CD4-positive, alpha-beta memory T cell (primary cell): ENCODE measurements at regions of chr2 and their contacts with region 1.

Region 1: DNA sequence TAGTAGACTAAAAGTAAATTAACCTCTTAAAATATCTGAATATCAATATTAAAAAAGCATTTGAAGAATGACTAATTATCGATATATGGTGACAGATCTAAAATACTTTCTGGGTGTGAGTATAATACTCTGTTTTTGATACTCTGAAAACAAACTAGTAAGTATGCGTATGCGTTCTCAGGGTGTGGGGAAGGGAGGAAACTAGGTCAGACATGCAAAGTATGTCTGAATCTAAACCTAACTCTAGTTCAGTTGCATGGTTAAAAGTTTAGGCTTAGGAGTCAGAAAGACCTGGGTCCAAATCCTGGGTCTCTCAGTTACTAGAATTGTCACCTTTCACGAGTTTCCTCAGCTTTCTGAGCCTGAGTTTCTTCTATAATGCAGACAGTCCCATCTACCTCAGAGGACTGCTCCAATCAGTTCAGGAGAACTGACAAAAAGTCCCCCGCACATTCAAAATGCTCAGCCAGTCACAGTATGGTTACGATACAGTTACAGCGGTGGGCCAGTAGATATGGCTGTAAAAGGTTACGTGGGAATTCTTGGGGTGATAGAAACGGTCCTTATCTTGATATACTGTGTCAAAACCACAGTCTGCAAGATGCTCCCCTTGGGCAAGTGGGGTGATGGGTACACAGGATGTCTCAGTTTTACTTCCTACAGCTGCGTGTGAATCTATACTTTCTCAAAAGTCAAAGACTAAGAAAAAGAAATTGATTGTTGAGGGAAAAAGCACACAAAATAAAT is 29.2 kb downstream of the UNC50 start:
- DNase-seq: peak; percentile 51 to 88 (median 59)
- H3K4me3 ChIP-seq: no peak overlapping the region
- H3K4me3 Mint-ChIP-seq: peak overlapping the region in 7 of 8 donors; percentile 61 to 84 (median 73)
- H3K27ac ChIP-seq: peak overlapping the region; percentile 56
- H3K27ac Mint-ChIP-seq: peak overlapping the region; percentile 84 to 95 (median 94)
- H3K4me1 ChIP-seq: peaks cover 39% of the 10 kb centered on the region
- H3K4me1 Mint-ChIP-seq: peaks cover 27 to 46% (median 38%) of the 10 kb centered on the region in 4 donors
- H3K27me3 ChIP-seq: no peaks in the 10 kb centered on the region
- H3K27me3 Mint-ChIP-seq: no peaks in the 10 kb centered on the region

Region 2: GRCh38 chr2:98234776-98235175 is 402.8 kb before region 1 on chr2:
- CTCF ChIA-PET with region 1: no interaction called
- POLR2A ChIA-PET with region 1: no interaction called
- intact Hi-C with region 1: no loop called
- DNase-seq: no peak
- H3K4me3 ChIP-seq: no peak overlapping the region
- H3K4me3 Mint-ChIP-seq: no peak overlapping the region
- H3K27ac ChIP-seq: no peak overlapping the region
- H3K27ac Mint-ChIP-seq: no peak overlapping the region
- H3K4me1 ChIP-seq: no peaks in the 10 kb centered on the region
- H3K4me1 Mint-ChIP-seq: no peaks in the 10 kb centered on the region
- H3K27me3 ChIP-seq: no peaks in the 10 kb centered on the region
- H3K27me3 Mint-ChIP-seq: peaks cover 15 to 16% of the 10 kb centered on the region in 2 donors

Region 3: DNA sequence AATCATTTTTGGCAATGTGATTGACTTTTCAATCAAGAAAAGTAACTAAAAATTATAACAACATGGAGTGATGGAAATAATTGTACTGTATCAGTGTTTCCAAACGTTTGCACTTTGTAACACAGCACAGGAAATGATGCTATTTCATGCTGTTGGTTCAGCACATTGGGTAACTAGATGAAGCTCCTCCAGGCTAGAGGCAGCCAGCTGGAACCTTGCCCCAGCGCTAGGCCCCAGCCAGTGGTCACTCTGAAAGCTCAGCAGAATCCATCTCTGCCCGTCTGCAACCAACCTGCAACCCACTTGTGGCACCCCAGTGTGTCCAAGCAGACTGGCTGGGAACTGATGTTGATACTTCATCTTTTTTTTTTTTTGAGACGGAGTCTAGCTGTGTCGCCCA is 13.9 kb before region 1 on chr2:
- CTCF ChIA-PET with region 1: no interaction called
- POLR2A ChIA-PET with region 1: interaction called, 4 read pairs
- intact Hi-C with region 1: loop called (anchors 2 kb)
- DNase-seq: no peak
- H3K4me3 ChIP-seq: no peak overlapping the region
- H3K4me3 Mint-ChIP-seq: no peak overlapping the region
- H3K27ac ChIP-seq: no peak overlapping the region
- H3K27ac Mint-ChIP-seq: peak overlapping the region in 2 of 7 donors; percentile 17 to 60
- H3K4me1 ChIP-seq: peaks cover 4% of the 10 kb centered on the region
- H3K4me1 Mint-ChIP-seq: peaks cover 3 to 16% (median 7%) of the 10 kb centered on the region in 4 donors
- H3K27me3 ChIP-seq: no peaks in the 10 kb centered on the region
- H3K27me3 Mint-ChIP-seq: no peaks in the 10 kb centered on the region

Region 4: DNA sequence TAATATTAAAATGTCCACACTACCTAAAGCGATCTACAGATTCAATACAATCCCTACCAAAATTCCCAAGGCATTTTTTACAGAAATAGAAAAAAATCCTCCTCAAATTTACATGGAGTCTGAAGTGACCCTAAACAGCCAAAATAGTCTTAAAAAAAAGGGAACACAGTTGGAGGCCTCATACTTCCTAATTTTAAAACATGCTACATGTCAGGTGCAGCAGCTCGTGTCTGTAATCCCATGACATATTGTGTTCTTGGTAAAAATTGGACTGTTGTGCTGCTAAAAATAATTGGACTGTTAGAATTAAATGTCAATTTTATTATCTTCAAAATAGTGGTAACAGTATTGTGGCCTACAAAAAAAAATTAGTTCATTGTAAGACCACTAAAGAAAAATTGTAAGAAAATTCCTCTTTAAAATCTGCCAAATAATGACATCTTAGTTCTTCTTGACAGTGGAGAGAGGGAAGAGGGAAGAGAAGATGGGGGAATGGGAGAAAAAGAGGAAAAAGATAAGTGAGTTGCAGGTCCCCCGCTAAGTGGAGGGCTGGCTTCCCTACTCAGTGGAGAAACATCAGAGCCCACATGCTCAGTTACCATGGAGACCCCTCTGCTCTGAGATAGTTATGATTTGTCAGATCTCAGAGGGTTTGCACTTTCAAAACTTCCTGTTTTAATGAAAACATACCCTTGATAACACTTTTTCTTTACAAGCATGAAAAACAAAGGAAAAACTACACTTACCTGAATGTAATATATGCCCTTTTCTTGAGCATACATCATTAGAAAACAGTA is 17.3 kb after region 1 on chr2:
- CTCF ChIA-PET with region 1: interaction called, 9 read pairs
- POLR2A ChIA-PET with region 1: interaction called, 10 read pairs
- intact Hi-C with region 1: no loop called
- DNase-seq: peak; percentile 47 to 67 (median 50)
- H3K4me3 ChIP-seq: no peak overlapping the region
- H3K4me3 Mint-ChIP-seq: peak overlapping the region; percentile 19 to 73 (median 55)
- H3K27ac ChIP-seq: peak overlapping the region; percentile 55
- H3K27ac Mint-ChIP-seq: peak overlapping the region; percentile 88 to 94 (median 93)
- H3K4me1 ChIP-seq: peaks cover 93% of the 10 kb centered on the region
- H3K4me1 Mint-ChIP-seq: peaks cover 65 to 95% (median 80%) of the 10 kb centered on the region in 4 donors
- H3K27me3 ChIP-seq: no peaks in the 10 kb centered on the region
- H3K27me3 Mint-ChIP-seq: no peaks in the 10 kb centered on the region

Region 5: DNA sequence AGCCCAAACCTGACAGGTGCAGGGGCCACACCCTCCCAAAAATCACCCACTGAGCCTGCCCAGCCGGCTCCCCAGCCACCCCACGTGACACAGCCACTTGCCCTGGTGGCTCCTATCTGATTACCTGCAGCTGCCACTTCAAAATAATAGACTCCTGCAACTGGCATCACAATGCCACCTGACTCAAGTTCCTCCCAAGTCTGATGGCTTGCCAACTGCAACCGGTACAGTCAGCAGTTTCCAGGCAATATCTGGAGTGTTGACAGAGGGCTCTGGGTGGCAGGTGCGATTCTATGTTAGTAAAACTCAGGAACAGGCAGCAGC is 232.3 kb after region 1 on chr2:
- CTCF ChIA-PET with region 1: no interaction called
- POLR2A ChIA-PET with region 1: no interaction called
- intact Hi-C with region 1: no loop called
- DNase-seq: peak; percentile 1 to 34 (median 4)
- H3K4me3 ChIP-seq: no peak overlapping the region
- H3K4me3 Mint-ChIP-seq: peak overlapping the region in 5 of 8 donors; percentile 50 to 69 (median 61)
- H3K27ac ChIP-seq: no peak overlapping the region
- H3K27ac Mint-ChIP-seq: peak overlapping the region in 3 of 7 donors; percentile 11 to 48 (median 35)
- H3K4me1 ChIP-seq: no peaks in the 10 kb centered on the region
- H3K4me1 Mint-ChIP-seq: peaks cover 0 to 7% (median 4%) of the 10 kb centered on the region in 4 donors
- H3K27me3 ChIP-seq: no peaks in the 10 kb centered on the region
- H3K27me3 Mint-ChIP-seq: no peaks in the 10 kb centered on the region

Region 6: DNA sequence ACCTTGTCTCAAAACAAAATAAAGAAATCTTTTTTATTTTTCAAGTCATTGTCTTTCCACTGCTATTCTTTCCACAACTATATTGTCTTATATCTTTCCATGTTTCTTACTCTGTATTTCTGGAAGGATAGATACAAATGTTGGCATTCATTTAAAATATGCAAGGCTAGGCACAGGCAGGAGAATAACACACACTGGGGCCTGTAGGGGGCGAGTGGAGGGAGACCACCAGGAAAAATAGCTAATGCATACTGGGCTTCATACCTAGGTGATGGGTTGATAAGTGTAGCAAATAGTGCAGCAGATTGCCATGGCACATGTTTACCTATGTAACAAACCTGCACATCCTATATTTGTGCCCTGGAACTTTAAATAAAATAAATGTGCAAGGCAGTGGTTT is 553.0 kb after region 1 on chr2:
- CTCF ChIA-PET with region 1: no interaction called
- POLR2A ChIA-PET with region 1: no interaction called
- intact Hi-C with region 1: no loop called
- DNase-seq: no peak
- H3K4me3 ChIP-seq: no peak overlapping the region
- H3K4me3 Mint-ChIP-seq: no peak overlapping the region
- H3K27ac ChIP-seq: no peak overlapping the region
- H3K27ac Mint-ChIP-seq: peak overlapping the region in 2 of 7 donors; percentile 14 to 24
- H3K4me1 ChIP-seq: no peaks in the 10 kb centered on the region
- H3K4me1 Mint-ChIP-seq: peaks cover 6 to 20% (median 9%) of the 10 kb centered on the region in 4 donors
- H3K27me3 ChIP-seq: no peaks in the 10 kb centered on the region
- H3K27me3 Mint-ChIP-seq: no peaks in the 10 kb centered on the region